Prostate gland (tissue), 2 donors: ENCODE measurements at regions of chr1 and their contacts with region 1.

Region 1: DNA sequence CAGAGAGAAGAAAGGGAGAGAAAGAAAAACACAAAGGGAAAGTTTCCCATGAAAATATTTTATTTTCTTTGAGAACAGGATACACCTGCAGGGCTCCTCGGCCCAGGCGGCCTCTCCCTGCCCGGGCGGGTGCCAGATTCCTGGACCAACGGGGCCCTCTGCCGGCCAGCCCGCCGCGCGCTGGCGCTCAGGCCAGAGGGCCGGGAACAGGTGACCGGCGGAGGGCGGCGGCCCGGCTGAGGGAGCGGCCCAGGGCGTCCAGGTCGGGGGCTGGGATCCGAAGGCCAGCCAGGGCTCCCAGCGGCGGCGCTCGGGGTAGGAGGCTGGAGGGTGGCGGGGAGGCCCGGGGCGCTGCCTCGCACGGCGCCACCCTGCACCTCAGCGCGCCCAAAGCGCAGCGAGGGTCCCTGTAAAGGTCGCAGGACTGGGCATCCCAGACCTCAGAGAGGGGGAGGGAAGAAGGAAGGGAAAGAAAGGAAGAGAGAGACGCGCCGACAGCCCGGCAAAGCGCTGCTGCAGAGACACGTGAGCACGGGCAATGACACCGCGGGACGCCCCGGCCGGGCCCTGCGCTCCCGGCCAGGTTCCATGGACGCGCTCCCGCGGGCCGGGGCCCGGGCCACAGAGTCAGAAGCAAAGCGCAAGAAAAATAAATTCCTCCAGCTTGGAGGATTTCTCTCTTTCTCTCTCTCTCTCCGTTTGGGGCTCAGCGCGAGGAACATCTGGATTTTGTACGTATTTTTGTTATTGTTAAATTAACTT is 927 bp downstream of the WNT9A start:
- DNase-seq: peak; percentile 74
- H3K4me3 ChIP-seq: peak overlapping the region; percentile 43 to 51
- H3K27ac ChIP-seq: peak overlapping the region; percentile 62 to 70
- H3K4me1 ChIP-seq: peaks cover 13% of the 10 kb centered on the region
- H3K27me3 ChIP-seq: no peaks in the 10 kb centered on the region
- CTCF ChIP-seq: peak; percentile 51 to 94 (median 85)
- POLR2A ChIP-seq: no peak

Region 2: DNA sequence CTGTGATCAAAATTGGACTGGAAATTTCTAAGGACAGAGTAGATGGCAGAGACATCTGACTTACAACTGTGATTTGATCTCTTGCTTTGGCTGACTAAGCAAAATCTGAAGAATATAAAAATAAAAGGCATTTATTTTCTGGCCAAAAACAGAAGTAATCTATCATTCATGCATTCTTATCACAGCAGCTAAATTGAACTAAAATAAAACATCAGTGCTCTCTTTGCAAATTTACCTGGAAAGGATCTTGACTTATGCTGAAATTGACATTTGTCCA is 464.8 kb before region 1 on chr1:
- intact Hi-C with region 1: loop called (anchors 5 kb)
- DNase-seq: no peak
- H3K4me3 ChIP-seq: no peak overlapping the region
- H3K27ac ChIP-seq: no peak overlapping the region
- H3K4me1 ChIP-seq: no peaks in the 10 kb centered on the region
- H3K27me3 ChIP-seq: no peaks in the 10 kb centered on the region
- CTCF ChIP-seq: no peak
- POLR2A ChIP-seq: no peak

Region 3: DNA sequence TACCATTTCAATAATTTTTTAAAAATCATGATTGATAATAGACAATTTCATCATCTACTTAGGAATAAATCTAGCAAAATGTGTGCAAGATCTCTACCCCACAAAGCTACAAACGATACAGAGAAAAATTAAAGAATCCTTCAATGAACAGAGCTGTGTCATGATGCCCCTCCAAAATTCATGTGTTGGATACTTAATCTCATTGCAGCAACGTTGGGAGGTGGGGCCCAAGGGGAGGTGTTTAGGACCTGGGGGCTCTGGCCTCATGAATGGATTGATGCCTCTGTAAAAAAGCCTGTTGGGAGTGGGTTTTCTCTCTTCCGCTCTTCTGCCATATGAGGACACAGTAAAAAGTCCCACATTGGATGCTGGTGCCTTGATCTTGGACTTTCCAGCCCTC is 76.4 kb before region 1 on chr1:
- intact Hi-C with region 1: no loop called
- DNase-seq: no peak
- H3K4me3 ChIP-seq: no peak overlapping the region
- H3K27ac ChIP-seq: no peak overlapping the region
- H3K4me1 ChIP-seq: no peaks in the 10 kb centered on the region
- H3K27me3 ChIP-seq: no peaks in the 10 kb centered on the region
- CTCF ChIP-seq: no peak
- POLR2A ChIP-seq: no peak

Region 4: DNA sequence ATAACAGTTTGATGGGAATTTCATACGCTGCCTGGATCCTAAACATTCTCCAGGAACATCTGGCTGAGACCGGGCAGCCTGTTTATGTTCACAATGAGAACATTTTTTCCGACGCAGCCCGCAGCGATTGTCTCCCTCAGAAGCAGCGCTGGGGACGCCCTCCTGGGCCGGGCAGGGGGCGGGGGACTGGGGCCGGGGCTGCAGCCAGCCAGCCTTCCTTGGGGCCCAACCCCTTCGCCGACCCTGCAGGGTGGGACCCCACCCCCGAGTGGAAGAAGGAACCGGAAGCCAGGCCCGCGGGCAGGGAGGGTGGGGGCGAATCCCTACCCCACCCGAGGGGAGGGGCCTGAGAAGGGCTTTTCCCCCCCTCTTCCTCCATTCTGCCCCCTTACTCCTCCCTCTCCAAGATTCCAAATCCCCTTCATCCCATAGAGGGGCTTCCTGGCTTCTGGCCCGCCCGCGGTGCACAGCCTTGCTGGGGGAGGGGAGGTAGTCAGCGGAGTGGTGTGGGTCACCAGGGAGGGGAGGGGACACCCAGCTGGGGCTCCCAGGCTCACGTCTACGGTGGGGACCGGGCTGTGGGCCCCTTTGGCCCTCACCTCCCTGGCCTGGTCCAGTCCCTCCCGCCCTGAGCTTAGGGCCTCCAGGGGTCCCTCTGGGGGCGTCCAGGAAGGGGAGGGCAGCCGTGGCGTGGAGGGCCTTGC is 59.7 kb before region 1 on chr1:
- intact Hi-C with region 1: loop called (anchors 5 kb)
- DNase-seq: peak; percentile 10
- H3K4me3 ChIP-seq: peak overlapping the region; percentile 31 to 47
- H3K27ac ChIP-seq: peak overlapping the region; percentile 78 to 85
- H3K4me1 ChIP-seq: peaks cover 8% of the 10 kb centered on the region
- H3K27me3 ChIP-seq: no peaks in the 10 kb centered on the region
- CTCF ChIP-seq: no peak
- POLR2A ChIP-seq: no peak

Region 5: DNA sequence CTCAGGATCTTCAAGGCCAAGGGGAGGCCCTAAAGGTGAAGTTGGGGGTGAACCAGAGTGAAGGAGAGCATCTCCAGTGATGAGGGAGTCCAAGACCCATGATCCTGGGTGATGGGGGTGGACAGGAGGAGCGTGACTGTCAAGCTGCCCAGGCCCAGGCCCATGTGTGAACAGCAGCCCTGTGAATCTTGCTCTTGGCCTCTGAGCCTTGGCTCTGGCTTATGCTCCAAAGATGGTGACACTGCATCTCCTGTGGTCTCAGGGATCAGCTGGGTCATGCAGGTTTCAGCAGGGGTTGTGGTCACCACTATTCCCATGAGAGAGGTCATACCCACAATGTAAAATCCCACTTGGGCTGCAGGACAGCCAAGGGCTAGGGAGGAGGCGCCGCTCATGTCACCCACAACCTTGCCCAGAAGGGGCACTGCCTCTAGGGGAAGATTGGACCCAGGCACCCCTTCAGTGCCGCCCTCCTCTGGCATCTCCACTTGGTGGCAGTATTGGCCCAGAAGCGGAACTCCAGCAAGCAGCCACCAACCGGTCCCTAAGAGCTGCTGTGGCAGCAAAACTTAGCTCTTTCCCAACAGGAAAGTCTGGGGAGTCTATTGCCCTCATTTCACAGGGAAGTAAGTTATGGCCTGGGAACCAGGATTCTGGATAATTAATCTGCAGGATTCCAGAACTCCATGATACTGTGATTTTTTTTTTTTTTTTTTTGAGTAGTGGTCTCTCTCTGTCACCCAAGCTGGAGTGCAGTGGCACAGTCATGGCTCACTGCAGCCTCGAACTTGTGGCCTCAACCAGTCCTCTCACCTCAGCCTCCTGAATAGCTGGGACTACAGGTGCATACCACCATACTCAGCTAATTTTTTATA is 52.5 kb after region 1 on chr1:
- intact Hi-C with region 1: no loop called
- DNase-seq: peak; percentile 65
- H3K4me3 ChIP-seq: no peak overlapping the region
- H3K27ac ChIP-seq: no peak overlapping the region
- H3K4me1 ChIP-seq: no peaks in the 10 kb centered on the region
- H3K27me3 ChIP-seq: no peaks in the 10 kb centered on the region
- CTCF ChIP-seq: peak; percentile 13 to 91 (median 70)
- POLR2A ChIP-seq: no peak

Region 6: GRCh38 chr1:228082135-228082891 is 135.5 kb after region 1 on chr1 and contains the start of gene ARF1:
- intact Hi-C with region 1: loop called (anchors 5 kb)
- DNase-seq: peak; percentile 92
- H3K4me3 ChIP-seq: peak within 1 kb of the TSS; percentile 95 to 100
- H3K27ac ChIP-seq: peak within 1 kb of the TSS; percentile 98 to 100
- H3K4me1 ChIP-seq: peaks cover 31% of the 10 kb centered on the region
- H3K27me3 ChIP-seq: no peaks in the 10 kb centered on the region
- CTCF ChIP-seq: peak in 3 of 4 experiments; percentile 30 to 66 (median 57)
- POLR2A ChIP-seq: peak; percentile 91
- total RNA-seq, gene ARF1: 478 to 512 TPM

Region 7: GRCh38 chr1:228092342-228093037 is 145.7 kb after region 1 on chr1:
- intact Hi-C with region 1: no loop called
- DNase-seq: no peak
- H3K4me3 ChIP-seq: no peak overlapping the region
- H3K27ac ChIP-seq: no peak overlapping the region
- H3K4me1 ChIP-seq: peaks cover 43% of the 10 kb centered on the region
- H3K27me3 ChIP-seq: no peaks in the 10 kb centered on the region
- CTCF ChIP-seq: no peak
- POLR2A ChIP-seq: no peak